Heart left ventricle (tissue), 16 donors: ENCODE measurements at regions of chr18 and their contacts with region 1.

Region 1: GRCh38 chr18:48410095-48410920 is 1.1 kb upstream of the ZBTB7C start:
- DNase-seq: peak; percentile 91 to 96 (median 94)
- ATAC-seq: peak; percentile 97 to 99 (median 98)
- H3K4me3 ChIP-seq: peak overlapping the region; percentile 68 to 87 (median 78)
- H3K27ac ChIP-seq: peak overlapping the region in 11 of 12 donors; percentile 56 to 83 (median 73)
- H3K4me1 ChIP-seq: peaks cover 0 to 23% (median 12%) of the 10 kb centered on the region in 12 donors
- H3K27me3 ChIP-seq: peaks cover 0 to 56% (median 5%) of the 10 kb centered on the region in 9 donors
- CTCF ChIP-seq: no peak
- POLR2A ChIP-seq: peak in 1 of 2 donors; percentile 66

Region 2: GRCh38 chr18:47846431-47846830 is 563.9 kb before region 1 on chr18:
- intact Hi-C with region 1: no loop called
- DNase-seq: no peak
- ATAC-seq: no peak
- H3K4me3 ChIP-seq: no peak overlapping the region
- H3K27ac ChIP-seq: no peak overlapping the region
- H3K4me1 ChIP-seq: no peaks in the 10 kb centered on the region
- H3K27me3 ChIP-seq: no peaks in the 10 kb centered on the region
- CTCF ChIP-seq: no peak
- POLR2A ChIP-seq: no peak

Region 3: GRCh38 chr18:48037481-48038271 is 372.6 kb before region 1 on chr18:
- intact Hi-C with region 1: loop called in 1 of 10 experiments (anchors 5 kb)
- DNase-seq: peak in 3 of 5 donors; percentile 43 to 61 (median 44)
- ATAC-seq: peak; percentile 66 to 84 (median 74)
- H3K4me3 ChIP-seq: no peak overlapping the region
- H3K27ac ChIP-seq: no peak overlapping the region
- H3K4me1 ChIP-seq: peaks cover 0 to 27% (median 2%) of the 10 kb centered on the region in 12 donors
- H3K27me3 ChIP-seq: no peaks in the 10 kb centered on the region
- CTCF ChIP-seq: peak; percentile 24 to 65 (median 54)
- POLR2A ChIP-seq: no peak

Region 4: GRCh38 chr18:48161191-48161910 is 249.0 kb before region 1 on chr18:
- intact Hi-C with region 1: loop called in 1 of 10 experiments (anchors 10 kb)
- DNase-seq: peak; percentile 86 to 90 (median 89)
- ATAC-seq: peak; percentile 93 to 98 (median 96)
- H3K4me3 ChIP-seq: peak overlapping the region; percentile 41 to 96 (median 68)
- H3K27ac ChIP-seq: peak overlapping the region; percentile 80 to 96 (median 90)
- H3K4me1 ChIP-seq: peaks cover 1 to 43% (median 23%) of the 10 kb centered on the region in 12 donors
- H3K27me3 ChIP-seq: no peaks in the 10 kb centered on the region
- CTCF ChIP-seq: no peak
- POLR2A ChIP-seq: peak in 1 of 2 donors; percentile 52

Region 5: GRCh38 chr18:48230467-48231113 is 179.7 kb before region 1 on chr18:
- intact Hi-C with region 1: loop called in 1 of 10 experiments (anchors 5 kb)
- DNase-seq: peak in 2 of 5 donors; percentile 40 to 55
- ATAC-seq: peak; percentile 37 to 71 (median 59)
- H3K4me3 ChIP-seq: no peak overlapping the region
- H3K27ac ChIP-seq: no peak overlapping the region
- H3K4me1 ChIP-seq: peaks cover 0 to 38% (median 22%) of the 10 kb centered on the region in 12 donors
- H3K27me3 ChIP-seq: no peaks in the 10 kb centered on the region
- CTCF ChIP-seq: peak in 10 of 12 donors; percentile 18 to 54 (median 44)
- POLR2A ChIP-seq: no peak

Region 6: DNA sequence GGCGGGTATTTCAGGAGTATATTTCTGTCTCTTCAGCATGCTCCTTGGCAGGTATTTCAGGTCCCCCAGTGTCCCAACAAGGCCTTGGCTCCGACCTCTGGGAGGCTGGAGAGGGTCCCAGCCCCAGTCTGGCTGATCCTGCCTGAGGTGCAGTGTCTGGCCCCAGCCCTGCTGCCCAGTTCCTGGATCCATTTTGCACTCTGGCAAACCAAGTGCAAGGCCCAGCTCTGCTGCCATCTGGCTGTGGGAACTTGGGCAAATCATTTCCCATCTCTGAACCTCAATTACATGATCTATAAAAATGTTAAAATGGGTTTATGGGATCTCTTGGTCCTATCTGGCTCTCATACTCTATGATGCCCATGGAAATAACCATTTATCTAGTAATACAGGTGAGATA is 64.7 kb before region 1 on chr18:
- intact Hi-C with region 1: loop called in 1 of 10 experiments (anchors 5 kb)
- DNase-seq: no peak
- ATAC-seq: peak in 2 of 4 donors; percentile 38 to 51
- H3K4me3 ChIP-seq: no peak overlapping the region
- H3K27ac ChIP-seq: no peak overlapping the region
- H3K4me1 ChIP-seq: peaks cover 0 to 13% (median 5%) of the 10 kb centered on the region in 12 donors
- H3K27me3 ChIP-seq: no peaks in the 10 kb centered on the region
- CTCF ChIP-seq: peak in 8 of 12 donors; percentile 11 to 40 (median 26)
- POLR2A ChIP-seq: no peak

Region 7: DNA sequence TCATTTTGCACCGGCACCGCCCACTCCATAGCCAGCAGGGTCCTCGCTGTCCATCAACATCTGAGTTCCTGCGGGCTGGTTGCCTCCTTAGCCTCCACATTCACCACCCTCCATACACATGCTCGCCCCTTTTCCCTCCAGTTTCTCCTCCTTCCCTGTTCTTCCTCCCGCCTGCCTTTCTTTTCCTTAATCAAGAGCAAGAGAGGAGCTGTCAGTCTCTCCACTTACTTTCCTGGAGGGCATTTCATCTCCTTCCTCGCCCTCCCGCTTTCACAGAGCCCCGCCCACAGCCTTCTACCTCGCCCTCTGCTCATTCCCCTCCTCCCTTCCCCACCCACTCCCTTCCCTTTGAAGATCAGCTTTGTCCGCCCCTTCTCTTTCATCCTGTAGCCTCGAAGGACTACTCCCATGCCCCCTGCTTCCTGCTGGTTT is 12.7 kb after region 1 on chr18:
- intact Hi-C with region 1: loop called in 1 of 10 experiments (anchors 1 kb)
- DNase-seq: no peak
- ATAC-seq: no peak
- H3K4me3 ChIP-seq: no peak overlapping the region
- H3K27ac ChIP-seq: no peak overlapping the region
- H3K4me1 ChIP-seq: peaks cover 0 to 14% (median 6%) of the 10 kb centered on the region in 12 donors
- H3K27me3 ChIP-seq: peaks cover 0 to 32% (median 0%) of the 10 kb centered on the region in 9 donors
- CTCF ChIP-seq: no peak
- POLR2A ChIP-seq: no peak